ENCODE measurements at regions of chr10 and their contacts with region 1.

Region 1: GRCh38 chr10:96831867-96832720 is at the start of gene LCOR:
- DNase-seq: peak; percentile 91
- ATAC-seq: peak; percentile 71
- H3K4me3 Mint-ChIP-seq: peak within 1 kb of the TSS; percentile 96
- H3K27ac Mint-ChIP-seq: peak within 1 kb of the TSS; percentile 96
- H3K4me1 Mint-ChIP-seq: peaks cover 49% of the 10 kb centered on the region
- H3K27me3 Mint-ChIP-seq: no peaks in the 10 kb centered on the region
- total RNA-seq, gene LCOR: 22.0 to 23.4 TPM

Region 2: DNA sequence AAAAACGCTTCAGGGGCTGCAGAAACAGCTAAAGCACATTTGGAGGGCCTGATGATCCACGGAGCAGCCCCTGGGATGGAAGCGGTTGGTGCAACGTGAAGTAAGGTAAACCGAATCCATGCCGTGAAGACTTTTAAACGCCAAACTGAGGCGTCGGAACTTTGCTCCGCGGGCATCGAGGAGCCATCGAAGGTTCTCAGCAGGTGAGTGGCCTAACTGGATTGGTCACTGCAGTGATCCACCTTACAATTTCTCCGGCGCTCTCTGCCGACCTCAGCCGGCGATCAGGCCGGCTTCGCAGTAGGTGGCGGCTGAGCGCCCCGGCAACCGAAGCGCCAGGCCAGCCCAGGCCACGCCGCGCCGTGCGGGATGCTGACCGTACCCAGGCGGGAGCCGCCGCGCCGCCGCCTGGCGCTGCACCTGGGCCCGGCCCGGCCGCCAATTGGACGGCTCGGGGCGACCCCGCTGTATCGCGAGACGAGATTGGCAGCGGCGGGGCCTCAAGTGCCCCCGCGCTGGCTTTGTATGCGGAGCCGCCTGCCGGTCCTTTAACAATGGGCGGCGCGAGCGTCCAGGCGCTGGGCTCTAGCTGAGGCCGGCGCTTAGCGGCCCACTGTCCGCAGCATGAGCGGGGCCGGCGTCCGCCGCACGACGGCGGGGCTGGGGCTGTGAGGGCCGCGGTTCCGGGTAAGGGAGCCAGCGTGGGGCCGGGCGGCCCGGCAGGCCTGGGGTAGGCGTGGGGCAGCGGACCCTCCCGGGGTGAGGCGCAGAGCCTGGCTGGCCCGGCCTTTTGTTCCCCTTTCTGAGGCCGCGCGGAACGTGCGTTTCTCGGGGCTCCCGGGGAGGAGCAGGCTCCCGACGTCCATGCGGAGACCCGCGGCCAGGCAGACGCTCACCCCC is 788.8 kb before region 1 on chr10 and contains the start of gene CCNJ:
- CTCF ChIA-PET with region 1: no interaction called
- POLR2A ChIA-PET with region 1: no interaction called
- intact Hi-C with region 1: loop called in 1 of 2 experiments (anchors 5 kb)
- DNase-seq: peak; percentile 90
- ATAC-seq: peak; percentile 93
- H3K4me3 Mint-ChIP-seq: peak within 1 kb of the TSS; percentile 93
- H3K27ac Mint-ChIP-seq: peak within 1 kb of the TSS; percentile 79
- H3K4me1 Mint-ChIP-seq: peaks cover 39% of the 10 kb centered on the region
- H3K27me3 Mint-ChIP-seq: no peaks in the 10 kb centered on the region
- total RNA-seq, gene CCNJ: 4.4 to 4.5 TPM

Region 3: GRCh38 chr10:96395931-96396877 is 435.9 kb before region 1 on chr10:
- CTCF ChIA-PET with region 1: no interaction called
- POLR2A ChIA-PET with region 1: no interaction called
- intact Hi-C with region 1: loop called (anchors 1 to 10 kb)
- DNase-seq: peak; percentile 82
- ATAC-seq: peak; percentile 85
- H3K4me3 Mint-ChIP-seq: peak overlapping the region; percentile 18
- H3K27ac Mint-ChIP-seq: no peak overlapping the region
- H3K4me1 Mint-ChIP-seq: no peaks in the 10 kb centered on the region
- H3K27me3 Mint-ChIP-seq: peaks cover 4% of the 10 kb centered on the region

Region 4: DNA sequence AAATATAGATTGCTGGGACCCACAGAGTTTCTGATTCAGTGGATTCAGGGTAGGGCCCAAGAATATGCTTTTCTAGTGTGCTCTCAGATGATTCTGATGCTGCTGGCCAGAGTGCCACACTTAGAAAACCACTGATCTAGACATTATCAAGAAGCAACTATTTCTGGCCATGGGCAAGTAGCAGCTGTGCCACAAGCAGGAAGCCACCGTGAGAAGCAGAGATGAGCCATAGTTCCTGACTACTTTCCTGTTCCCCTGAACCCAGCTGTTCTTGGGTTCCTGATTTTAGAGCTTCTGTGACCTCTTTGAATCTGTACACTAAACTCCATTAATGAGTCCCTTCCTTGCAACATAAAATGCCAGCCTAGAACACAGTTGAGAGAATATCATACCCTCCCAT is 73.7 kb before region 1 on chr10:
- CTCF ChIA-PET with region 1: no interaction called
- POLR2A ChIA-PET with region 1: no interaction called
- intact Hi-C with region 1: no loop called
- DNase-seq: no peak
- ATAC-seq: no peak
- H3K4me3 Mint-ChIP-seq: no peak overlapping the region
- H3K27ac Mint-ChIP-seq: no peak overlapping the region
- H3K4me1 Mint-ChIP-seq: no peaks in the 10 kb centered on the region
- H3K27me3 Mint-ChIP-seq: no peaks in the 10 kb centered on the region

Region 5: DNA sequence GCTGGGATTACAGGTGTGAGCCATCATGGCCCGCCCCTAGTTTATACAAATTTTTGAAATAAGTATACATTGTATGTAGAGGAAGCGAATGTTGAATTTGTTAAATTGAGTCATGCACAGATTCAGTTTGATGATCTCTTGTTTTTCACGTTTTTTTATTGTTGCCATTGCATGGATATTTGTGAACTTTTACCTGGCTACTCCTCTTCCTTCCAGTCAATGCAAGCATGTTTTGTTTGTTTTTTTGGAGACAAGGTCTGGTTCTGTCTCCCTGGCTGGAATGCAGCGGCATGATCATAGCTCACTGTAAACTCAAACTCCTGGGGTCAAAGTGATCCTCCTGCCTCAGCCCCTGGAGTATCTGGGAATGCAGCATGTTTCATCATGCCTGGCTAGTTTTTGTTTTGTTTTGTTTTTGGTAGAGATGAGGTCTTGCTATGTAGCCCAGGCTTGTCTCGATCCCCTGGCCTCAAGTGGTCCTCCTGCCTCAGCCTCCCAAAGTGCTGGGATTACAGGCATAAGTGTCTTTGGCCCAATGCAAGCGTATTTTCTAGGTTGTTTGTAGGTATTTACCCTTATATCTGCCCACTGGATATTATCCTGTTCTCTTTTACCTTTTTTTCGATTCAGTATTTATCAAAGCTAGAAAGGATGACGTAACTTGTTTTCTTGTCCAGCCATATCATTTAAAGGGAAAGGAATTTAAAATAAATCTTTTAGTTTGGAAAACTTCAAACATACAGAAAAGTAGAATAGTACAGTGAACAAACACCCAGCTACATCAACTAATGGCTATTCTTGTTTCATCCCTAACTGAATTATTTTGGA is 11.0 kb after region 1 on chr10:
- CTCF ChIA-PET with region 1: interaction called, 7 read pairs
- POLR2A ChIA-PET with region 1: no interaction called
- intact Hi-C with region 1: loop called in 1 of 2 experiments (anchors 1 kb)
- DNase-seq: no peak
- ATAC-seq: no peak
- H3K4me3 Mint-ChIP-seq: no peak overlapping the region
- H3K27ac Mint-ChIP-seq: no peak overlapping the region
- H3K4me1 Mint-ChIP-seq: peaks cover 59% of the 10 kb centered on the region
- H3K27me3 Mint-ChIP-seq: no peaks in the 10 kb centered on the region

Region 6: DNA sequence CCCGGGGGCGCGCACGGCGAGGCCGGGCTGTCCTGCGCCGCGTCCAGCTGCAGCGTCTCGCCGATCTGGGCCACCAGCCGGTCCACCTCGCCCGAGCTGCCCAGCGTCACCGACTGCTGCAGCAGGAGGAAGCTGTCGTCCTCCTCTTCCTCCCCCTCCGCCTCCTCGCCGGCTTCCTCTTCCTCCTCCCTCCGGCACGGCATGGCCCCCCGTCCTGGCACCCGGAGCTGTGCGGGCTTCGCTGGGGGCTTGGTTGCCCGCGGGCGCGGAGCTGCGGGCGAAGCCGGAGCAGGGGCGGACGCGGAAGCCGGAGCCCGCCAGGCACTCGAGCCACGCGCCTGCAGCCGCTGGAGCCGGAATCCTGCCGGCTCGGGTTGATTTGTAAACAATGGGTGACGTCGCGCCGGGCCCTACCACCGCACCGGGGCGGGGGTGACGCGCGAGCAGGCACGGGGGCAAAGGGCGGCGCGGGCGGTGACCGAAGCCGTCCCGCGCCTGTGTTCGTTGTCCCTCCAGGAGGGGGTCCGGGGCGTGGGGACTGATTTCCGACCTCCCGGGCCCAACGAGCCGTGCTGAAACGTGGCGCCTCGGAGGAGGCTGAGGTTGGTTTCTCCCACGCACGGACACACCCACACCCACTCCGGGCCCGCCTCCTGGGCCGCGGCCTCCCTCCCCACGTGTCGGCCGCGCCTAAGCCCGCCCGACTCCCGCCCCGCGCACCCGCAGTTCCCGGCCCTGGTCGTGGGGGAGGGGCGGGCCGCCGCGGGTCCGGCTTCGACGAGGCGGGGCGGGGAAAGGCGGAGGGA is 502.5 kb after region 1 on chr10 and contains the start of gene FRAT2:
- CTCF ChIA-PET with region 1: no interaction called
- POLR2A ChIA-PET with region 1: no interaction called
- intact Hi-C with region 1: loop called in 1 of 2 experiments (anchors 2 kb)
- DNase-seq: peak; percentile 91
- ATAC-seq: peak; percentile 85
- H3K4me3 Mint-ChIP-seq: peak within 1 kb of the TSS; percentile 83
- H3K27ac Mint-ChIP-seq: peak within 1 kb of the TSS; percentile 86
- H3K4me1 Mint-ChIP-seq: peaks cover 40% of the 10 kb centered on the region
- H3K27me3 Mint-ChIP-seq: no peaks in the 10 kb centered on the region
- total RNA-seq, gene FRAT2: 3.0 to 4.3 TPM

Region 7: GRCh38 chr10:97520978-97521761 is 689.1 kb after region 1 on chr10:
- CTCF ChIA-PET with region 1: no interaction called
- POLR2A ChIA-PET with region 1: no interaction called
- intact Hi-C with region 1: no loop called
- DNase-seq: no peak
- ATAC-seq: no peak
- H3K4me3 Mint-ChIP-seq: no peak overlapping the region
- H3K27ac Mint-ChIP-seq: no peak overlapping the region
- H3K4me1 Mint-ChIP-seq: no peaks in the 10 kb centered on the region
- H3K27me3 Mint-ChIP-seq: no peaks in the 10 kb centered on the region

Region 8: GRCh38 chr10:97640174-97640867 is 808.2 kb after region 1 on chr10 and contains the start of gene PI4K2A:
- CTCF ChIA-PET with region 1: no interaction called
- POLR2A ChIA-PET with region 1: no interaction called
- intact Hi-C with region 1: loop called in 1 of 2 experiments (anchors 1 kb)
- DNase-seq: peak; percentile 100
- ATAC-seq: peak; percentile 99
- H3K4me3 Mint-ChIP-seq: peak within 1 kb of the TSS; percentile 97
- H3K27ac Mint-ChIP-seq: peak within 1 kb of the TSS; percentile 93
- H3K4me1 Mint-ChIP-seq: peaks cover 18% of the 10 kb centered on the region
- H3K27me3 Mint-ChIP-seq: no peaks in the 10 kb centered on the region
- total RNA-seq, gene PI4K2A: 8.5 to 8.9 TPM